Heart left ventricle (tissue), 16 donors: ENCODE measurements at regions of chr10 and their contacts with region 1.

Region 1: GRCh38 chr10:27155066-27155754 is at the start of gene MASTL:
- DNase-seq: peak; percentile 93 to 96 (median 95)
- ATAC-seq: peak; percentile 96
- H3K4me3 ChIP-seq: peak within 1 kb of the TSS; percentile 69 to 95 (median 83)
- H3K27ac ChIP-seq: peak within 1 kb of the TSS; percentile 95 to 100 (median 99)
- H3K4me1 ChIP-seq: peaks cover 0 to 47% (median 25%) of the 10 kb centered on the region in 12 donors
- H3K27me3 ChIP-seq: no peaks in the 10 kb centered on the region
- CTCF ChIP-seq: no peak
- POLR2A ChIP-seq: peak; percentile 78 to 89
- total RNA-seq, gene MASTL: 1.4 to 6.1 (median 2.3) TPM

Region 2: DNA sequence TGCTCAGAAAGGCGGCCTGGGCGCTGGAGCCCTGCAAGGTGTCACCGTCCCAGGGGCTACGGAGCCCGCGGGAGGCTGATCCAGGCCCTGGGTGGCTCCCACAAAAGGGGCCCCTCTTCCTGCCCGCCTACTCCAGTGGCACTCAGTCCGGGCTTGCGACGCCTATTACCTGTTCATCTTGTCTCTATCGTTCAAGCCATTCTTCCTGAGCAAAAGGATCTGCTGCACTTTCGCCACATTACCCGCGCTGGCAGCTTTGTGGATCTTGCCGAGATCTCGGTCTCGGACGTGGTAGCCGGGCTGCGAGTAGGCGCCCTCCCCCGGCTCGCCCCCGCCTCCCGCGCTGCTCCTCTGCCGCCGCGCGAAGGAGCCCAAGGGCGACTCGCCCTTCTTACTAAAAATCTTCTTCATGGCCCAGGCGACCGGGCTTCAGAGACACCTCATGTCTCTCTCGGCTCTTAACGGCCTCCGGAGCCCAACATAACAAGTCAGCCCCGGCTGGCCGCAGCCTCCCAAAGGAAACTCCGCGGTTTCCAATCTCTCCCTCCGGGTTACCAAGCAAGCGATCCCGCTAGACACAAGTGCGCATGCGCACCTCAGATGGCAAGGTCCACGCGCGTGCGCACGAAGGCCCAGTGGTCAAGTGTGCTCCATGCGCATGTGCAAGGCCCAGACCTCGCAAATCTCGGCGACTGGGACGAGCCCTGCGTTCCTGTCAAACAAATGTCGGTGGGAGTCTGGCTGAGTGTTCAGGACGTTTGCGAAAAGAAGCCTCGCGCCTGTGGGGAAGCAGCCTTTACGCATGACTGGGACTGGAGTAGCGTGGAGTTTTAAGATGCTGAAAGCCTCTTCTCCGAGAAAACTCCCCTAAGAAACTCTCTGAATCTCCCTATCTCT is 55.0 kb before region 1 on chr10 and contains the start of gene ANKRD26:
- intact Hi-C with region 1: loop called in 3 of 10 experiments (anchors 2 to 5 kb)
- DNase-seq: peak; percentile 97 to 100 (median 99)
- ATAC-seq: peak; percentile 94 to 97 (median 94)
- H3K4me3 ChIP-seq: peak within 1 kb of the TSS; percentile 70 to 92 (median 78)
- H3K27ac ChIP-seq: peak within 1 kb of the TSS; percentile 88 to 97 (median 93)
- H3K4me1 ChIP-seq: peaks cover 0 to 23% (median 11%) of the 10 kb centered on the region in 12 donors
- H3K27me3 ChIP-seq: no peaks in the 10 kb centered on the region
- CTCF ChIP-seq: peak in 2 of 12 donors; percentile 13 to 14
- POLR2A ChIP-seq: peak; percentile 47 to 87
- total RNA-seq, gene ANKRD26: 7.0 to 10.9 (median 9.4) TPM

Region 3: DNA sequence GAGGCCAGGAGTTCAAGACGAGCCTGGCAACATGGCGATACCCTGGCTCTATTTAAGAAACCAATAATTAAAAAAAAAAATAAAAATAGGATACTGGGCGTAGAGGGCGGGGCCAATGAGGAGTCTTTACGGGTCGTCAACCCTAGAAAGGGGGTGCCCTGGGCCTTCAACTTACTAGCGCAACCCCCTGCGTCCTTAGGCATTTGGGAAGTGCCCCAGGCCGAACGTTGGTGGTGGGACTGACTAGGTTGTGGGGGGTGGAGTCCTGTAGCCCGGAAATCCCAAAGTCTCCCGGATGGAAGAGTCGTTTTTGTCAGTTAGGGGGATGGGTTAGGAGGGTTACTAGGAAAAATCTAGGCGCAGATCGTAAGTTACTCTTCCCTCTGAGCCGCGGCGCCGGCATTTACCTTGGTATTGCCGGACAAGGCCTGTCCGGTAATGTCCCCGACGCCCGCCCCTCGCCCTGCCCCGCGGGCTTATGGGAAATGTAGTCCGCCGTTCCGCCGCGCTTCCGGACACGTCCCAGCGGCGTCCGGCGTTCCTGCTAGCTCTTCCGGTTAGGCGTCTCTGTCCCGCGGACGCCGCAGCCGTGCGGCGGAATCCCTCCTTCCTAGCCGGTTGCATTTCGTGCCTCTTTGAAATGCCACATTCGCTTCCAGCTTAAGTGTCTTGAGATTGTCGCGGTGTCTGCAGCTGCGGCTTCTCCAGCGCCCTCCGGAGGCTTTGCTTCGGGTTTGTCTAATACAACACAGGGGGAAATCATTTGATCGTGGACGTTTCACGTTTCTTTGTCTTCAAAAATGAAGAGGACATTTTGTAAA is 86.7 kb after region 1 on chr10:
- intact Hi-C with region 1: loop called in 4 of 10 experiments (anchors 1 to 2 kb)
- DNase-seq: peak; percentile 92 to 96 (median 94)
- ATAC-seq: peak; percentile 91 to 93 (median 91)
- H3K4me3 ChIP-seq: peak overlapping the region; percentile 61 to 90 (median 80)
- H3K27ac ChIP-seq: peak overlapping the region; percentile 90 to 98 (median 96)
- H3K4me1 ChIP-seq: peaks cover 2 to 43% (median 34%) of the 10 kb centered on the region in 12 donors
- H3K27me3 ChIP-seq: no peaks in the 10 kb centered on the region
- CTCF ChIP-seq: peak; percentile 11 to 52 (median 20)
- POLR2A ChIP-seq: peak; percentile 75 to 91

Region 4: GRCh38 chr10:27285108-27285507 is 129.9 kb after region 1 on chr10:
- intact Hi-C with region 1: loop called in 1 of 10 experiments (anchors 10 kb)
- DNase-seq: peak in 1 of 5 donors; percentile 22
- ATAC-seq: peak in 3 of 4 donors; percentile 38 to 85 (median 65)
- H3K4me3 ChIP-seq: no peak overlapping the region
- H3K27ac ChIP-seq: no peak overlapping the region
- H3K4me1 ChIP-seq: no peaks in the 10 kb centered on the region
- H3K27me3 ChIP-seq: no peaks in the 10 kb centered on the region
- CTCF ChIP-seq: peak in 10 of 12 donors; percentile 33 to 58 (median 46)
- POLR2A ChIP-seq: no peak